Dendritic cell treated with granulocyte-macrophage colony-stimulating factor and Interleukin-4, amounts not matched to agents 40 ng/mL and 50 ng/mL, for 4 days (primary cell): ENCODE measurements at regions of chr7 and their contacts with region 1.

Region 1: DNA sequence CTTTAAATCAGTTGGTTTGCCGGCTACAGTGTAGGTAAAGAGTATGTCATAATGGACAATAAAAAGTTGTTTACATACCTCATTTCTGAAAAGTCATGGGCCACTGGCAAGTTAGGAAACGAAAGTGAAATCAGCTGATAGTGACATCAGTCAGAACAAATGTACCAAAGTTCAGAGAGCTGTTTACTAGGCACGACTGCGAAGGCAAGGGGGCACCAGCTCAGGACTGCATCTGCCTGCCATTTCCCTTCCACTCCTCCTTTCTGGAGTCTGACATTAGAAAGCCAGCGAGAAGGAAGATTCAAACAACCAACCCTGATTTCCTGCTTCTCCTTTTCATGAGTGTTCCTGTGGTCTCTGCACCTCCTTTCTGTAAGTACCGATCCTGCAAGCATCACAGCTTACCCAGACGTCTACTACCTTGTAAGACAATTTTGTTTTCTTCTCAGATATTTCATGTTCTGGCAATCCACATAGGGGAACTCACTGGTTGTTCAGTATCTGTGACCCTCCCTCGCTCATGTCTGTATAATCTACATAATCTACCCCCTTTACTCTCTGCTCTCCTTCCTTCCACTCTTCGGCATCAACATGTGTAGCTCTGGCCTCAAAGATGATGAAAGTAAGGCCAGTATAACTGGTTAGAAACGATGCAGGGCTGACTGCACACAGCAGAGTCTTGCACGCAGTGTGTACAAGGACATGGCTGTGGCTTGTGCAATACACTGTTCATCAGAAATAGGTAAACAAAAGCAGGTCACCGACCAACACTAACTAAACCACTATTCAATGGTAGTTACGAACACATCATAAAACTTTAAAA is at the start of gene TMEM140:
- H3K4me3 Mint-ChIP-seq: peak within 1 kb of the TSS; percentile 79
- H3K27ac Mint-ChIP-seq: peak within 1 kb of the TSS; percentile 91
- H3K4me1 Mint-ChIP-seq: peaks cover 56% of the 10 kb centered on the region
- H3K27me3 Mint-ChIP-seq: no peaks in the 10 kb centered on the region

Region 2: GRCh38 chr7:134986363-134987251 is 161.5 kb before region 1 on chr7 and contains the start of gene AGBL3:
- intact Hi-C with region 1: loop called (anchors 5 kb)
- H3K4me3 Mint-ChIP-seq: peak within 1 kb of the TSS; percentile 98
- H3K27ac Mint-ChIP-seq: peak within 1 kb of the TSS; percentile 95
- H3K4me1 Mint-ChIP-seq: peaks cover 12% of the 10 kb centered on the region
- H3K27me3 Mint-ChIP-seq: no peaks in the 10 kb centered on the region

Region 3: GRCh38 chr7:135342887-135343286 is 194.8 kb after region 1 on chr7:
- intact Hi-C with region 1: no loop called
- H3K4me3 Mint-ChIP-seq: no peak overlapping the region
- H3K27ac Mint-ChIP-seq: no peak overlapping the region
- H3K4me1 Mint-ChIP-seq: no peaks in the 10 kb centered on the region
- H3K27me3 Mint-ChIP-seq: no peaks in the 10 kb centered on the region